ENCODE measurements at regions of chr10 and their contacts with region 1.

Region 1: DNA sequence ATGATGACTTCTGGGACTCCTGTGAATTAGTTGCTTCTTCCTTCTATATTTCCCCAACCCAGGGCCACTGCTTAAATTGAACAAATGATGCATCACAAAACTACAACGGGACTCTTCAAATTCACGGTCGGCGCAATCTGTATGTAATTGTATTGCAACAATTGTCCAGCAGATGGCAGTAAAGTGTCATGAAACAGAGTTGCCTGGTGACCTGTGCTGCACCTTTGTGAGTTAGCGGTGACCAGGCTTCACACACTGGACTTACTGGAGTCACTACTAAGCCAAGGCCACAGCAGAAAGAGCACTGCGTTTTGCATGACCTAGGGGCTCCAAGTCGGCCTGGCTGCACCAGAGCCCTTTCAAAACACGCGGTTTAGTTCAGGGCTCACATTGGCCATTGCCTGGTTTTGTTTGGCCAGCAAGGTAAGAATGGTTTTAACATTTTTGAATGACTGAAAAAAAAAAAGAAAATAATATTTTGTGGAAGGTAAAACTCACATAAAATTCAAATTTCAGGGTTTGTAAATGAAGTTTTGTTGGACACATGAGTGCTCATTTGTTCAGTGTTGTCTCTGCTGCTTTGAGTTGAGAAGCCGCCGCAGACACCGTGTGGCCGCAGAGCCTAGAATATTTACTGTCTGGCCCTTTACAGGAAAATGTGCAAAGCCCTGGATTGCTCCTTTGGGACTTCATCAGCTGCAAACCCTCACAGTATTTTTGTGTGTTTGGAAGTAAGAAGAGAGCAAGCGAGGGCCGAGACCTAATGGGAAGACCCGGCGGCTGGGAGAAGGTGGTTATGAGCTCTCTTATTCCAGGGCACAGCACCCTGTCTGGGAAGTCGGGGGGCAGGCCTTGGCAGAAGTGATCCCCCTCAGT is 23.2 kb upstream of the ZNF32 start:
- DNase-seq: peak; percentile 53
- ATAC-seq: peak; percentile 75
- H3K4me3 Mint-ChIP-seq: no peak overlapping the region
- H3K27ac Mint-ChIP-seq: no peak overlapping the region
- H3K4me1 Mint-ChIP-seq: peaks cover 5% of the 10 kb centered on the region
- H3K27me3 Mint-ChIP-seq: peaks cover 33% of the 10 kb centered on the region

Region 2: DNA sequence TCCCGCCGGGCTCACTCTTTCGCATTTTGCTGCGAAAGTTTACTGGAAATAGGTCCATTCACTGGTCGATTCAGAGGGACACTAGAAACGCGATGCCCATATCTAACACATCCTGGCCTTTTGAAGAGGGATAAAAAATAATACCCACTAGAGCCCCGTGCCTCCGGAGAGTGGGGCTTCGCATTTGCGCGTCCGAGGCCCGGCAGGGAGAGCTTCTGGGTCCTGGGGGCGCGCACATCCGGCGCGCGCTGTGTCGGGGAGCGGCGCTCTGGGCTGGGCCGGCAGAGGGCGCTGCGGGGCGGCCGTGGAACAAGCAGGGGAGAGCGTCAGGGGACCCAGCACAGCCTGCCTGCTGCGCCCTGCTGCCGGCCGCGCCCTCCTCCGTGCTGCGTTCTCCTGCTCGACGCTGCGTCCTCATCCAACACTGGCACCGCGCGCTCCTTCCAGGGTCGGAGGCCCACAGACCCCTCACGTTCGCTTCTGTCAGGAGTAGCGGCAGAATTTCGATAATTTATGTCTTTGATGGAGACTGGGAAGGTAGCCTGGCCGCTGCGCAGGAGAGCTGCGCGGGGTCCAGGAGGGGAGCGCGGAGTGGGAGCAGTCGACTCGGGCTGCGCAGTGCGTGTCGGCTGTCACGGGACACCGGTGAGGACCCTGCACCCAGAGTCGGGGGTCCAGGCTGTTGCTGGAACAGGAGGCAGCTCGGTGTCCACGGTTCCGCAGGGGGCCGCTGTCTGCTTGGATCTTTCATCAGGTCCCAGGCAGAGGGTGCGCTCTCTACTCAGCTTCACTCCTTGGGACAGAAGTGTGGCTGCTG is 18.3 kb after region 1 on chr10:
- CTCF ChIA-PET with region 1: interaction called, 10 read pairs
- POLR2A ChIA-PET with region 1: no interaction called
- intact Hi-C with region 1: no loop called
- DNase-seq: peak; percentile 92
- ATAC-seq: peak; percentile 100
- H3K4me3 Mint-ChIP-seq: peak overlapping the region; percentile 71
- H3K27ac Mint-ChIP-seq: peak overlapping the region; percentile 72
- H3K4me1 Mint-ChIP-seq: peaks cover 2% of the 10 kb centered on the region
- H3K27me3 Mint-ChIP-seq: peaks cover 24% of the 10 kb centered on the region

Region 3: GRCh38 chr10:44300666-44301649 is 629.1 kb after region 1 on chr10:
- CTCF ChIA-PET with region 1: no interaction called
- POLR2A ChIA-PET with region 1: no interaction called
- intact Hi-C with region 1: loop called in 1 of 2 experiments (anchors 10 kb)
- DNase-seq: peak; percentile 47
- ATAC-seq: peak; percentile 87
- H3K4me3 Mint-ChIP-seq: no peak overlapping the region
- H3K27ac Mint-ChIP-seq: no peak overlapping the region
- H3K4me1 Mint-ChIP-seq: no peaks in the 10 kb centered on the region
- H3K27me3 Mint-ChIP-seq: peaks cover 6% of the 10 kb centered on the region

Region 4: GRCh38 chr10:44386546-44387052 is 714.7 kb after region 1 on chr10:
- CTCF ChIA-PET with region 1: interaction called, 14 read pairs
- POLR2A ChIA-PET with region 1: no interaction called
- intact Hi-C with region 1: loop called (anchors 1 kb)
- DNase-seq: peak; percentile 61
- ATAC-seq: peak; percentile 74
- H3K4me3 Mint-ChIP-seq: no peak overlapping the region
- H3K27ac Mint-ChIP-seq: no peak overlapping the region
- H3K4me1 Mint-ChIP-seq: peaks cover 3% of the 10 kb centered on the region
- H3K27me3 Mint-ChIP-seq: peaks cover 31% of the 10 kb centered on the region

Region 5: DNA sequence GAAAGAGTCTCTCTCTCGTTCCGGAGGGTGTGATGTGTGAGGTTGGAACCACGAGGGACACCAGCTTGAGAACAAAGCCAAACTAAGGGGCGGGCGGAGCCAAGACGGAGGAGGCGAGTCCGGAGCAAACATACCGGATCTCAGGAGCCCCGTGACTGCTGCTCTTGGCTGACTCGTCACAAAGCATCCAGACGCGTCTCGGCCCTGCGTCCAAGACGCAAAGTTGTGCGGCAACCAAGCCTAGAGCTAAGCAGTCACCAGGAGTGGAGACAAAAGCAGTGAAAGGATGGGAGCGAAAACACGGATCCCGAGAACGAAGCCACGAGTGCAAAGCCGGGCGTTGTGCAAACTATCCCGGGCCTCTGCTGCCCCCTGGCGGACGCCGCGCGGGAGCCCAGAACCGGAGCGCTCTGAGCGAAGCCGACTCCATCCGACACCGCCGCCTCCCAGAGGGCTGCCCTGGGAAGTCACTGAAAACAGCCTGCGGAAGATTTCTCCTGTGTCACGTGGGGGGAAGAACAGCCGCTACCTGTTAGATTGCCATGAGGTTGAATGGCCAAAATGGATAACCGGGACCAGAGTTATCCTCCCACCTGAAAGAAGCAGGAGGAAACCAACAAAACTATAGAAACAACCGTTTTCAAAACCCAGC is 1192.9 kb after region 1 on chr10:
- CTCF ChIA-PET with region 1: interaction called, 3 read pairs
- POLR2A ChIA-PET with region 1: no interaction called
- intact Hi-C with region 1: loop called (anchors 2 kb)
- DNase-seq: peak; percentile 92
- ATAC-seq: peak; percentile 92
- H3K4me3 Mint-ChIP-seq: peak overlapping the region; percentile 79
- H3K27ac Mint-ChIP-seq: peak overlapping the region; percentile 52
- H3K4me1 Mint-ChIP-seq: peaks cover 17% of the 10 kb centered on the region
- H3K27me3 Mint-ChIP-seq: peaks cover 54% of the 10 kb centered on the region

Measured in activated CD4-positive, alpha-beta T cell treated with anti-CD3 and anti-CD28 coated beads for 36 hours (primary cell).